ENCODE measurements at regions of chr7 and their contacts with region 1.

Region 1: DNA sequence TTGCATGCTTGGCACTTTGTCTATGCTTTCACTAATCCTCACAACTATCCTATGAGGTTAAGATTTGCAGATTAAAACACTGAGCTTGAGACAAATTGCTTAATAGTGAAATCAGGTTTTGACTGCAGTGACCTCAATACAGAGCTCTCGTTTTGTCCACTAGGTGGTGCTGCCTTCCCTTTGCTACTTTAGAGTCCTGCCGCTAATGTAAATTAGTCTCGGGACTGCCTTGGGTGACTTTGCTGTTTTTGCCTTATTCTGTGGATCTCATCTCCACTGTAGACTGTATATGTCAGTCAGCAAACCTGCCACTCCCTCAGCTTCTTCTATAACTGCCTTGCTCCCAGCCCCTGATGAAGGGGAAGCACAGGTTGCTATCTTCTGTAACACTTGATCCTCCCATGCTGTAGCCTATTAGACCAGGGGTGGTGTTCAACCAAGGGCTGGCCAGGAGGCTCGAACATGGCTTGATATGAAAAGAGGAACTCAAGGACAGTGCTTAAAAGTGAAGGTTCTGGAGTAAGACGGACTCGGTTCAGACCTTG is 26.0 kb downstream of the ASB4 start:
- DNase-seq: peak; percentile 13
- H3K4me3 ChIP-seq: no peak overlapping the region
- H3K27me3 ChIP-seq: peaks cover 5% of the 10 kb centered on the region
- CTCF ChIP-seq: peak; percentile 87

Region 2: GRCh38 chr7:94912085-94912484 is 599.7 kb before region 1 on chr7:
- CTCF ChIA-PET with region 1: no interaction called
- POLR2A ChIA-PET with region 1: no interaction called
- DNase-seq: no peak
- H3K4me3 ChIP-seq: no peak overlapping the region
- H3K27me3 ChIP-seq: no peaks in the 10 kb centered on the region
- CTCF ChIP-seq: no peak

Region 3: GRCh38 chr7:95491634-95492320 is 20.0 kb before region 1 on chr7:
- CTCF ChIA-PET with region 1: interaction called, 11 read pairs
- POLR2A ChIA-PET with region 1: no interaction called
- DNase-seq: no peak
- H3K4me3 ChIP-seq: no peak overlapping the region
- H3K27me3 ChIP-seq: no peaks in the 10 kb centered on the region
- CTCF ChIP-seq: no peak

Region 4: GRCh38 chr7:95501261-95501832 is 10.4 kb before region 1 on chr7:
- CTCF ChIA-PET with region 1: interaction called, 17 read pairs
- POLR2A ChIA-PET with region 1: no interaction called
- DNase-seq: no peak
- H3K4me3 ChIP-seq: no peak overlapping the region
- H3K27me3 ChIP-seq: no peaks in the 10 kb centered on the region
- CTCF ChIP-seq: no peak

Region 5: DNA sequence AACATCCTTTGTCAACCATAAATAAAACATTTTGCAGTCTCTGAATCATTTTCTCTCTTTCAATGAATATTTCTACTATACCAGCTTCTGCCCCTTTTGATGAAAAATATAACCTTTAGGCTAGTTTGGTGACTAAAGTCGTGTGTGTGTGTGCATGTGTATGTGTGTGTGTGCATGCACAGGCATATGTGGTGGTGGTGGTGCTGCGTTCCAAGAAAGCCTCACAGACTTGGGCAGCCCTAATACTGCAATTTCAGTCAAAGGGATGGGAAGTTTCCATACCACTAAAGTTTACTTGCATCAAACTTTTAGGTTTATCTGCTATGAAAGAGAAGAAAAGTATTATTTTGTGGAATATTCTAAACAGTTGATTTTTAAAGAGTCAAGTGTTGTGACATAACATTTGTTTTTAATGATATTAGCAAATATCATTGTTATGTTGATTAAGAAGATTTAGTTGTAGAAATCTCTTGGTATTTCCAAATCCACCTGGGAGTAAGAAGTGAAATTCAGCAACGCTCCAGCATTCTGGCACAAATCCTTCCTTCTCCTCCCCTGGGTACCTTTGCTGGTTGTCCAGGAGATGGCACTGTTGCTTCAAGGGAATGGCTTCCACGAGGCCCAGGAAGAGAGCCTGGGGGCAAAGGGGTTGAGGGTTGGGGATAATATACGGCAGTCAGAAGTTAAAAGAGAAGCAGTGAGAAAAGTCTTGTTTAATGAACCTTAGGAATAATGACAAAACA is 15.4 kb after region 1 on chr7:
- CTCF ChIA-PET with region 1: interaction called, 79 read pairs
- POLR2A ChIA-PET with region 1: no interaction called
- DNase-seq: no peak
- H3K4me3 ChIP-seq: no peak overlapping the region
- H3K27me3 ChIP-seq: peaks cover 2% of the 10 kb centered on the region; the same call in 1 of the 2 replicates
- CTCF ChIP-seq: peak; percentile 89

Region 6: DNA sequence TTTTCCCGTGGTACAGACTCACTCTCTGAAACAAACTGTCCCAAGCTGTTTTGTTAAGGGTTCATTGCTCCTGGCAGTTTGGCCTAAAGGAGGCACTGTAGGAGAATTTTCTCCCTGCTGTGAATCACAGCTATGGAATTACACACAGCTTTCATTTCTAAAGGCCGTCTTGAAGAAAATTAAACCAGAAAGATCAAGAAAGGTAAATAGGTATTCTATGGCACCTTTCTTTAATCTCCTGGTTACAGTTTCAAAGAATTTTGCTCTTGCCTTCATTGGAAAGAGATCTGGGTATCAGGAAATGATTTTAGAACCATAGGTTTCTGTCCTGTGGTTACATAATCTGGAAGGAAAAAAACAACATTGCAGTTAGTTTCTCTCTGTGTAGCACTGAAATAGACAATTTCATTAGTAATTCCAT is 33.3 kb after region 1 on chr7:
- CTCF ChIA-PET with region 1: interaction called, 12 read pairs
- POLR2A ChIA-PET with region 1: no interaction called
- DNase-seq: peak; percentile 14
- H3K4me3 ChIP-seq: peak overlapping the region; percentile 13
- H3K27me3 ChIP-seq: peaks cover 5% of the 10 kb centered on the region
- CTCF ChIP-seq: peak; percentile 88

Region 7: GRCh38 chr7:95684037-95684436 is 172.2 kb after region 1 on chr7:
- CTCF ChIA-PET with region 1: interaction called, 274 read pairs
- POLR2A ChIA-PET with region 1: no interaction called
- DNase-seq: no peak
- H3K4me3 ChIP-seq: no peak overlapping the region
- H3K27me3 ChIP-seq: peaks cover 2% of the 10 kb centered on the region; the same call in 1 of the 2 replicates
- CTCF ChIP-seq: peak; percentile 53

Region 8: DNA sequence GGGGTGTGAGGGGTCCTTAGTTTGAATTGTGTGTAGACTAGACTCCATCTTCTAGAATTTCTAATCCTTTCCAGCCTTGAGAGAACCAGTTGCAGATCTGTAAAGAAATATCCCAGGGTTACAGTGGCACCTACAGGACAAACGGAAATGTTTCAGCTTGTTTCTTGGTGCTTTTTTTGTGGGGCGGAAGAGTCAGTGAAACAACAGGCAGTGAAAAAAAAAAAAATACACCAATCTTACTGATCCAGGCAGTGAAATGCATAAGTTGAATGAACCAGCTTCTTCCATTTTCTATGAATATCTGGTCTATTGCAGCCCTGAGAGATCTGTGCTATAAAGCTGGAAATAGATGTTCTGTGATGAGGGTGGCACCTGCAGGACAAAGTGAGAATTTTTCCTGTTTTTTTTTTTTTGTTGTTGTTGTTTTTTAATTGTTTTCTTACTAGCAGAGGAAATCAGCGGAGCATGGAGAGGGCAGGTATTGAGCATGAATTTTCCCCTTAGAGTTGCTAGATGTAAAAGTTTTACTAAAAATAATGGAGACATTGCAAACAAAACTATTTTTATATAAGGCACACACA is 178.7 kb after region 1 on chr7:
- CTCF ChIA-PET with region 1: interaction called, 274 read pairs
- POLR2A ChIA-PET with region 1: no interaction called
- DNase-seq: no peak
- H3K4me3 ChIP-seq: no peak overlapping the region
- H3K27me3 ChIP-seq: peaks cover 2% of the 10 kb centered on the region; the same call in 1 of the 2 replicates
- CTCF ChIP-seq: peak; percentile 58

Region 9: GRCh38 chr7:96084881-96085551 is 573.2 kb after region 1 on chr7:
- CTCF ChIA-PET with region 1: no interaction called
- POLR2A ChIA-PET with region 1: no interaction called
- DNase-seq: peak; percentile 31
- H3K4me3 ChIP-seq: no peak overlapping the region
- H3K27me3 ChIP-seq: no peaks in the 10 kb centered on the region
- CTCF ChIP-seq: no peak